Posterior cingulate gyrus (tissue), 11 donors: ENCODE measurements at regions of chr3 and their contacts with region 1.

Region 1: DNA sequence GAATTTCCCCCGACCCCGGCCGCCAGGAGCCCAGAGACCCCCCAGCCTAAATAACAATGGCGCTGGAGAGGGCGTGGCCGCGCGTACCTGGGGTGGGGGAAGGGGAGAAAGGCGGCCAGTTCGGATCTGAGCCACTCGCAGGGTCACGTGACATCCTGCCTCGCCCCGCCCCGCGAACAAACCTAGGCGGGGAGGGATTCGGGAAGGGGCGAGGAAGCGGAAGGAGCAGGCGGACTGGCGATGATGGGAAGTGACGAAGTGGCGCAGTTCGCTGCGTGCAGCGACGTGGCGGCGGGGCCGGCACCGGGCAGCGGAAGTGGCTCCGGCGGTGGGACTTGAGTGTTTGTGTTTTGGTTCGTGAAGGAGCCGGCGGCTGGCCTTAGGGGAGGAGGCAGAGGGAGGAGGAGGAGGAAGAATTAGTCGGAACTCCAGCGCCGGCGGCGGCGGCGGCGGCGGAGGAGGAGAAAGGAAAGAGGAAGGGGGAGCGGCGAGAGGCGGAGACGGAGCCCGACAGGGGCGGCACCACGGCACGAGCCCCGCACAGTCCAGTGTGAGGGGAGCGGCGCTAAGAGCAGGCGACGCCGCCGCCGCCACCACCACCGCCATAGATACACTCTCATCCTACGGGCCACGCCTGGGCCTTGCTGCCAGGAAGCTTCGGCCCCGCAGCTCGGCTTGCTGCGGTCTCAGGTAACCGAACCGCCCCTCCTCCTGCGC is at the start of gene RAB5A:
- DNase-seq: peak; percentile 92 to 99 (median 95)

Region 2: DNA sequence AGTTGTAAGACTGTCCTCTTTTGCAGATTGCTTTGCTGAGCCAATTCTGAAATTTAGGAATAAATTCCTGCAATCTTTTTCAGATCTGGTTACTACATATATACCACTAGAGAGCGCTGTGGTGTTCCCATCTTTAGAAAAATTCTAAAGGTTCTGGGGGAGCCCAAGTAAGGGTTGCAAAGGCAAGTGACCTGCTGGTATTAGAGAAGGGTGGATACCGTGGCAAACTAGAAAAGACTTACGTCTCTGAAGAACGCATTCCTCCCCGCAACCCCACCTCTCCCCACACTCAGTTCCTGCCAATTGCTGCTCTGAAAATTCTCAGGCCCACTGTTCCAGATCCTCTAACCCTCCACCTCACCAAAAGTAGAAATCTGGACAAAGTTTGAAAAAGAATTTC is 61.5 kb before region 1 on chr3:
- intact Hi-C with region 1: loop called (anchors 5 kb)
- DNase-seq: no peak

Region 3: GRCh38 chr3:20185701-20186598 is 239.0 kb after region 1 on chr3 and contains the start of gene SGO1:
- intact Hi-C with region 1: loop called (anchors 5 kb)
- DNase-seq: peak; percentile 98 to 100 (median 99)